Activated CD4-positive, alpha-beta T cell treated with anti-CD3 and anti-CD28 coated beads, Interleukin-2, amount 10 ng/mL, durations not matched to agents 24 days and 14 days (primary cell): ENCODE measurements at regions of chr14 and their contacts with region 1.

Region 1: GRCh38 chr14:30621940-30622830 is at the start of gene SCFD1:
- DNase-seq: peak; percentile 99
- H3K4me3 Mint-ChIP-seq: peak within 1 kb of the TSS; percentile 87
- H3K27ac Mint-ChIP-seq: peak within 1 kb of the TSS; percentile 95
- H3K4me1 Mint-ChIP-seq: peaks cover 32% of the 10 kb centered on the region
- H3K27me3 Mint-ChIP-seq: no peaks in the 10 kb centered on the region
- total RNA-seq, gene SCFD1: 75.3 and 81.0 TPM in 2 replicates

Region 2: DNA sequence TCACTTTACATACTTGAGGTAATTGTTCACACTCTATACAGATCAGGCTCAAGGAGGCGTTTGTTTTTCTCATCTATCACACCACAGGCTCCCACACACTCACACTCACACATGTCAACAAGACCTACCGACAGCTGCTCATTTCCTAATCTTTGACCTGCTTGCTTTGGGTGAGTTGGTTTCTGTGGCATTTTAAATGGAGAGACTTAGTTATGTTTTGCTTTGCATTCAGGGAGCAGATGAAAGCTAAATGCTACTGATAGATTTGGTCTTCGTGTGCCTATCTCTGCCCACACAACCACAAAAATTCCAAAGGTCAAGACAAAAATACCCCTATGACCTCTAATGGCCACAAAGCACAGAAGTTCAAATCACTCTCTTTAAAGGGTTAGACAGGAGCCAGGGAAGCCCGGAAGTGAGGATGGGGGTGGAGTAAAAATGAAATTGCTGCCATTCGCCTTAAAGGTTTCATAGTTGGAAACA is 266.7 kb before region 1 on chr14:
- intact Hi-C with region 1: loop called (anchors 10 kb)
- DNase-seq: peak; percentile 61
- H3K4me3 Mint-ChIP-seq: peak overlapping the region; percentile 5
- H3K27ac Mint-ChIP-seq: peak overlapping the region; percentile 83
- H3K4me1 Mint-ChIP-seq: peaks cover 23% of the 10 kb centered on the region
- H3K27me3 Mint-ChIP-seq: no peaks in the 10 kb centered on the region

Region 3: DNA sequence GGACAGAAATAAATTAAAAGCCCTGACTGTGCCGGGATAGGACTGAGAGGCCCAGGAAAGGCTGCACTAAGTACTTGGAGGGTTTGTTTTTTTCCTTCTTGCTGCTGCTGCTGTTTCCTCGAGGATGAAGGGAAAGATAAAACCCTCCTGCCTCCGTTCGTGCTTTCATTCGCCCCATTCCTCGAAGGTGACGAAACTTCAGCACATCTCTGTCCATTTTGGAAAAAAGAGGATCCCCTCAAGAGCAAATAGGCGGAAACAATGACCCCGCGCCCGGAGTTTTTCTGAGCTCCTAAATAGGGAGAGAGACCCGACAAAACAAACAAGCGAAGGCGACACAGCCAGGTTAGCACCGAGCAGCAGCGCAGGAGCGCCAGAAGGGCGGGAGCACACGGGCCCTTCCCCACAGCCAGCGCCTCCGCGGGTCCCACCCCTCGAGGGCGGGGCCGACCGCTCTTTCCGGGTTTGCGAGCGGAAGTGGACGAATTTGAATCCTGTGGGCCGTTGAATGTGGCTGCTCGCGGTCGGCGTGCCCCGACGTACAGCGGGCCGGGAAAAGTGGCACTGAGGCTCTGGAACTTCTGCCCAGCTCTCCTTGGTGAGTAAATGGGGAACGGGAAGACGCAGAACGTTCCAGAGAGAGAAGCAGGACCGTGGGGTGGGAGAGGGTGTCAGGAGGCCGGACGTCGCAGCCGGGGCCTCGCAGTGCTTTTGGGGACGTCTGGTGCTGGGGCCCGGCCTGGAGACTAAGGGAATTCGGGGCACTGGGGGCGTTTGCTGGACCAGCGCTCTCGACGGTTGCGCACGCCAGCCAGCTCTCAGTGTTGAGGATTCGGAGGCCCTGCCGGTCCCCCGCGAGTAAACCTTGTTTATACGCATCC is 63.3 kb before region 1 on chr14 and contains the start of gene G2E3:
- intact Hi-C with region 1: loop called (anchors 1 kb)
- DNase-seq: peak; percentile 98
- H3K4me3 Mint-ChIP-seq: peak within 1 kb of the TSS; percentile 99
- H3K27ac Mint-ChIP-seq: peak within 1 kb of the TSS; percentile 100
- H3K4me1 Mint-ChIP-seq: peaks cover 22% of the 10 kb centered on the region
- H3K27me3 Mint-ChIP-seq: peaks cover 2% of the 10 kb centered on the region
- total RNA-seq, gene G2E3: 22.4 and 23.8 TPM in 2 replicates

Region 4: DNA sequence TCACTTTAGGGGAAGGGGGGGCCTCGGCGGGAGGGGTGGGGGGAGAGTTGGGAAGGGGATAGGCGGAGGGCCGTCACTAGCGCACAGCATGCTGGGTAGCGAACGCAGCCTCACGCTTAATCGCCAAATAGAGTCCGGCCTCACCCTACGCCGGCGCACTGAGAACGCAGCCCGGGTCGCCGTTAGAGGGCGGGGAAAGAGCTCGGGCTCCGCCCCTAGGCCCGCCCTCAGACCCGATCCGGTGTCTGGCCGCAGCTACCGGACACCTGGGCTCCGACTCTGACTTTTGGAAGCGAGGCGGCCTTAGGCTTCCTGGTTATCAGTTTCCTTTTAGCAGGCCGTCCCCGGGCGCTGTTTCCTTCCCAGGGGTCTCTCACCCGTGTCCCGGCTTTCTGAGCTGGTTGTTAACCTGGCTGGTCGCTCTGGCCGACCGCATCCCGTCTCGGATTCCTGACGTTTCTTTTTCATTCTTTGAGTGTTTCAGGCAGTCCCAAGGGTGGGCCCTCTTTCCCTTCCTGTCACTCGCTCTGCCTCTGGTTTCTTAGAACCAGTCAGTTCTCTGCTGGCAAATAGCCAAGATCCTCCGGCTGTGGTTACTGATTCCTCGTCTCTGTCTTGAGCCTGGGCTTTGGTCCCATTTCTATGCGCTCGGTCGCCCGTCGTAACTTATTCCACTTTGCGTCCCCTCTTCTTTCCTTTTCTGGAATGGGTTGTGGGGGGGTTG is 404.4 kb after region 1 on chr14:
- intact Hi-C with region 1: loop called (anchors 2 kb)
- DNase-seq: peak; percentile 98
- H3K4me3 Mint-ChIP-seq: peak overlapping the region; percentile 92
- H3K27ac Mint-ChIP-seq: peak overlapping the region; percentile 93
- H3K4me1 Mint-ChIP-seq: peaks cover 52% of the 10 kb centered on the region
- H3K27me3 Mint-ChIP-seq: no peaks in the 10 kb centered on the region

Region 5: GRCh38 chr14:31127690-31128089 is 505.5 kb after region 1 on chr14:
- intact Hi-C with region 1: loop called (anchors 5 kb)
- DNase-seq: peak; percentile 88
- H3K4me3 Mint-ChIP-seq: peak overlapping the region; percentile 14
- H3K27ac Mint-ChIP-seq: peak overlapping the region; percentile 59
- H3K4me1 Mint-ChIP-seq: peaks cover 31% of the 10 kb centered on the region
- H3K27me3 Mint-ChIP-seq: no peaks in the 10 kb centered on the region

Region 6: GRCh38 chr14:31456841-31457664 is 834.9 kb after region 1 on chr14 and contains the start of gene DTD2:
- intact Hi-C with region 1: loop called (anchors 5 kb)
- DNase-seq: peak; percentile 97
- H3K4me3 Mint-ChIP-seq: peak within 1 kb of the TSS; percentile 95
- H3K27ac Mint-ChIP-seq: peak within 1 kb of the TSS; percentile 98
- H3K4me1 Mint-ChIP-seq: peaks cover 24% of the 10 kb centered on the region
- H3K27me3 Mint-ChIP-seq: peaks cover 4% of the 10 kb centered on the region
- total RNA-seq, gene DTD2: 30.8 and 32.2 TPM in 2 replicates

Region 7: DNA sequence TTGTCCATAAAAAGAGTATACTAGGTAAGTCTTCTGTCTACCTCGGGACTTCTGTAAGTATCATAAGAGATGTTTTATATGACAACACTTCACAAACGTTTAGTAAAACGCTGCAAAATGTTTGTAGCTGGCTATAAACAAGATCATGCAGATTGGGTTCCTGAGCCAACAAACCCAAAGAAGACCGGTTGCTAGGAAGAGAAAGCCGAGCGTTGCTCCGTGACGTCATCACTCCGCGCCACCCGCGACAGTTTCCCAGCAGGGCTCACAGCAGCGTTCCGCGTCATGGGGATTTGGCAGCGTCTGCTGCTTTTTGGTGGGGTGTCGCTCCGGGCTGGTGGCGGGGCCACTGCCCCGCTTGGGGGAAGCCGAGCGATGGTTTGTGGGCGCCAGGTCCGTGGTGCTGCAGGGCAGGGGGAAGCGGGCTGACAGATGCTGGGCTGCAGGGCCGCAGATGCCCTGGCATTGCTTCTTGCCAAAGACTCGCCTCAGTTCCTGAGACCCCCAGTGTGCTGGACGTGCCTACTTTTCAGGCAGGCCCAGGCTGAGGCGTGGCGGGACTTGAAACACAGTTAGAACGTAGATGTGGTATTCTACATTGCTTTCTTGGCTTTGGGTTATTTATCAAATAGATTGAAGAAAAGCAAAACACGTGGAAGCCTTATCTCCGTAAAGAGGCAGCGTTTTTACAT is 939.1 kb after region 1 on chr14 and contains the start of gene NUBPL:
- intact Hi-C with region 1: loop called (anchors 2 kb)
- DNase-seq: peak; percentile 99
- H3K4me3 Mint-ChIP-seq: peak within 1 kb of the TSS; percentile 95
- H3K27ac Mint-ChIP-seq: peak within 1 kb of the TSS; percentile 97
- H3K4me1 Mint-ChIP-seq: peaks cover 16% of the 10 kb centered on the region
- H3K27me3 Mint-ChIP-seq: peaks cover 12% of the 10 kb centered on the region
- total RNA-seq, gene NUBPL: 12.1 and 12.3 TPM in 2 replicates